ENCODE measurements at regions of chr16 and their contacts with region 1.

Region 1: GRCh38 chr16:68275611-68276191 is 11.4 kb downstream of the SLC7A6 start:
- DNase-seq: peak; percentile 73
- H3K4me3 Mint-ChIP-seq: peak overlapping the region; percentile 49
- H3K27ac Mint-ChIP-seq: peak overlapping the region; percentile 94
- H3K4me1 Mint-ChIP-seq: peaks cover 72% of the 10 kb centered on the region
- H3K27me3 Mint-ChIP-seq: no peaks in the 10 kb centered on the region

Region 2: DNA sequence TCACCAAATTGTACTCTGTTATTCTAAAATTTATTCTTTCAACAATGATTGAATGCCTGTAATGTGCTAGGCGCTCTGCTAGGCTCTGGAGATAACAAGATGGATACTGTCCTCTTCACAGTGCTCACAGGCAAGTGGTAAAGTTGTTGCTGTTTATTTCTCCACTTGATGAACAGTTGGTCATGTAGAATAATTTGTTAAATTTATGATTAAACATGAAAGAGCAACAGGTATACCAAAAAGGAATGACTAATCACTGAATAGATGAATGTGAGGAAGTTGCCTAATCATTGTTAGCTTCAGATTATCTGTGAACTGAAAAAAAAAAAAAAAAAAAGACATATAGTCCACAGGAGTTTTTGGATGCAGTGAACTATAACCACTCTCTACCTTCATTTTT is 128.3 kb before region 1 on chr16:
- CTCF ChIA-PET with region 1: no interaction called
- POLR2A ChIA-PET with region 1: no interaction called
- DNase-seq: no peak
- H3K4me3 Mint-ChIP-seq: no peak overlapping the region
- H3K27ac Mint-ChIP-seq: no peak overlapping the region
- H3K4me1 Mint-ChIP-seq: peaks cover 11% of the 10 kb centered on the region
- H3K27me3 Mint-ChIP-seq: no peaks in the 10 kb centered on the region

Region 3: GRCh38 chr16:68237243-68238028 is 38.3 kb before region 1 on chr16:
- CTCF ChIA-PET with region 1: no interaction called
- POLR2A ChIA-PET with region 1: no interaction called
- DNase-seq: peak; percentile 87
- H3K4me3 Mint-ChIP-seq: peak overlapping the region; percentile 94
- H3K27ac Mint-ChIP-seq: peak overlapping the region; percentile 92
- H3K4me1 Mint-ChIP-seq: peaks cover 35% of the 10 kb centered on the region
- H3K27me3 Mint-ChIP-seq: peaks cover 8% of the 10 kb centered on the region

Region 4: DNA sequence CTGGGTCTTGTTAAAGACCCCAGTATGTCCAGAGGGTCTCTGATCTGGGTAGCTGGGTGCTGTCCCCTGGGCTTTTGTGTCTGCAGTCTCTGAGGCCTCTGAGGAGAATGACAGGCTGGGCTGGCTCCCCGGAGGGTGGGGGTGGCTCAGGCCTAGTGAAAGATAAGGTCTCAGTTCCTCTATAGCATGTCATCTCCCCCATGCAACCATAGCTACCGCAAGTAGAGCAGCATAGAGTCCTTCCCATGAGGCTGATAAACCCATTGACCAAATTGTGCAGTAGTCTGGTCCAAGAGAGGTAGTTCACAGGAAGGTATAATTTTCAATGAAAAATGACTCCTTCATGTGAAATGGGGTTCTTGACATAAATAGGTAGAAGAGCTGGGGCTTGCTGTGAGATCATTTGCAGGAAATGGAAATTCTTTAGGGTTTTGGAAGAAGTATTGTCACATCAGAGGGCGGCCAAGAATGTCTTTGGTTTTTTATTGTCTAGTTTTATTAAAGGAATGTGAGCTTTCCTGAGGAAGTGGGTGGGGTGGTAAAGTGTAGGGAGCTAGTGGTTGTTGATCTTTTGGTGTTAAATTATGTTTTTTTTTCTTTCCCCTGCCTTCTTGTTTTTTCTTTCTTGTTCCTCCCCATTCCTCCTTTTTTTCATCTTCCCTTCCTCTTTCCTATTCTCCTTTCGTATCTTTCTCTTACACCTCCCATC is 14.1 kb after region 1 on chr16:
- CTCF ChIA-PET with region 1: interaction called, 16 read pairs
- POLR2A ChIA-PET with region 1: interaction called, 3 read pairs
- DNase-seq: peak; percentile 56
- H3K4me3 Mint-ChIP-seq: peak overlapping the region; percentile 0
- H3K27ac Mint-ChIP-seq: peak overlapping the region; percentile 83
- H3K4me1 Mint-ChIP-seq: peaks cover 87% of the 10 kb centered on the region
- H3K27me3 Mint-ChIP-seq: no peaks in the 10 kb centered on the region